HCT116 (cell line): ENCODE measurements at regions of chr12 and their contacts with region 1.

Region 1: GRCh38 chr12:57632694-57633477 is at the start of gene B4GALNT1:
- DNase-seq: peak; percentile 46
- ATAC-seq: peak; percentile 87
- H3K4me3 ChIP-seq: peak within 1 kb of the TSS; percentile 71 to 92
- H3K27ac ChIP-seq: peak within 1 kb of the TSS; percentile 77
- H3K4me1 ChIP-seq: peaks cover 12 to 21% of the 10 kb centered on the region in 2 experiments
- H3K27me3 ChIP-seq: no peaks in the 10 kb centered on the region
- CTCF ChIP-seq: peak; percentile 74 to 84 (median 77); a peak in 5 of 6 replicates
- POLR2A ChIP-seq: no peak
- RAD21 ChIP-seq: peak; percentile 49
- total RNA-seq, gene B4GALNT1: 31.3 TPM

Region 2: GRCh38 chr12:57491393-57492280 is 141.2 kb before region 1 on chr12:
- CTCF ChIA-PET with region 1: no interaction called
- POLR2A ChIA-PET with region 1: no interaction called
- RAD21 ChIA-PET with region 1: no interaction called
- intact Hi-C with region 1: no loop called
- DNase-seq: no peak
- ATAC-seq: peak; percentile 37
- H3K4me3 ChIP-seq: no peak overlapping the region
- H3K27ac ChIP-seq: no peak overlapping the region
- H3K4me1 ChIP-seq: peaks cover 4 to 14% of the 10 kb centered on the region in 2 experiments; a peak in 3 of 4 replicates
- H3K27me3 ChIP-seq: no peaks in the 10 kb centered on the region
- CTCF ChIP-seq: peak in 2 of 3 experiments; percentile 27 to 34; a peak in 2 of 6 replicates
- POLR2A ChIP-seq: no peak
- RAD21 ChIP-seq: no peak

Region 3: GRCh38 chr12:57590536-57591479 is 42.1 kb before region 1 on chr12 and contains the start of gene PIP4K2C:
- CTCF ChIA-PET with region 1: no interaction called
- POLR2A ChIA-PET with region 1: no interaction called
- RAD21 ChIA-PET with region 1: no interaction called
- intact Hi-C with region 1: loop called (anchors 2 kb)
- DNase-seq: peak; percentile 61
- ATAC-seq: peak; percentile 94
- H3K4me3 ChIP-seq: peak within 1 kb of the TSS; percentile 94 to 95
- H3K27ac ChIP-seq: peak within 1 kb of the TSS; percentile 42
- H3K4me1 ChIP-seq: peaks cover 6 to 18% of the 10 kb centered on the region in 2 experiments; a peak in 3 of 4 replicates
- H3K27me3 ChIP-seq: no peaks in the 10 kb centered on the region
- CTCF ChIP-seq: no peak
- POLR2A ChIP-seq: peak; percentile 89
- RAD21 ChIP-seq: no peak
- total RNA-seq, gene PIP4K2C: 38.4 TPM

Region 4: DNA sequence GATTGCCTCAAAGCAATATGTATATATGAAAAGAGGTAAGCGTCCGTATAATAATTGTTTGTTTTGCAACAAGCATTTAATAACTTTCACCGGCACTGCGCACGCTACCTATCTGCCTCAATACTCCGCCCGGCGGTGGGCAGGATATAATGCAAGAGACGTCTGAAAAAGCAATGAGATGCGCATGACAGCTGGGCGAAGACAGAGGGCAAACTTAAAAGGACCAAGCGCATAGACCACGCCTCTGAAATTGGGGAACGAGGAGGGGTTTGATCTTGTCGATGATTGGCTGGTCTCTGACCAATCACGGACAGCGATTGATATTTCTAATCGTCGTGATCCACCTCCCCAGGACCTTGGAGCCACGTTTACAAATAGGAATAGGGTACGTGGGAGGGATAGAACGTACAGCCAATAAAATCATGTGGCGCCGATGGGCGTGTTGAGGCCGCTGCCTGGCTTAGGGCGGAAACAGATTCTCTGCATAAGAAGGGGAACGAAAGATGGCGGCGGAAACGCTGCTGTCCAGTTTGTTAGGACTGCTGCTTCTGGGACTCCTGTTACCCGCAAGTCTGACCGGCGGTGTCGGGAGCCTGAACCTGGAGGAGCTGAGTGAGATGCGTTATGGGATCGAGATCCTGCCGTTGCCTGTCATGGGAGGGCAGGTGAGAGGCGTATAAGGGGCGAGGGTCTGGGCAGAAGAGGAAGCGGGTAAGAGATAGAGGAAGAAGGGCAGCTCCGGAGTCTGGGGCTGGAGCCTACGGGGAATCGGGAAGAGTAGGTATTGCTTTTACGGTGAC is 61.0 kb after region 1 on chr12 and contains the start of gene OS9:
- CTCF ChIA-PET with region 1: no interaction called
- POLR2A ChIA-PET with region 1: no interaction called
- RAD21 ChIA-PET with region 1: no interaction called
- intact Hi-C with region 1: loop called (anchors 2 kb)
- DNase-seq: peak; percentile 100
- ATAC-seq: peak; percentile 97
- H3K4me3 ChIP-seq: peak within 1 kb of the TSS; percentile 95
- H3K27ac ChIP-seq: no peak within 1 kb of the TSS; the same call in 1 of the 2 replicates
- H3K4me1 ChIP-seq: peaks cover 4 to 10% of the 10 kb centered on the region in 2 experiments; a peak in 3 of 4 replicates
- H3K27me3 ChIP-seq: no peaks in the 10 kb centered on the region
- CTCF ChIP-seq: peak; percentile 66 to 75 (median 69); a peak in 5 of 6 replicates
- POLR2A ChIP-seq: peak; percentile 68
- RAD21 ChIP-seq: peak; percentile 62
- total RNA-seq, gene OS9: 98.4 TPM